CD4-positive, alpha-beta T cell (primary cell): ENCODE measurements at regions of chr9 and their contacts with region 1.

Region 1: DNA sequence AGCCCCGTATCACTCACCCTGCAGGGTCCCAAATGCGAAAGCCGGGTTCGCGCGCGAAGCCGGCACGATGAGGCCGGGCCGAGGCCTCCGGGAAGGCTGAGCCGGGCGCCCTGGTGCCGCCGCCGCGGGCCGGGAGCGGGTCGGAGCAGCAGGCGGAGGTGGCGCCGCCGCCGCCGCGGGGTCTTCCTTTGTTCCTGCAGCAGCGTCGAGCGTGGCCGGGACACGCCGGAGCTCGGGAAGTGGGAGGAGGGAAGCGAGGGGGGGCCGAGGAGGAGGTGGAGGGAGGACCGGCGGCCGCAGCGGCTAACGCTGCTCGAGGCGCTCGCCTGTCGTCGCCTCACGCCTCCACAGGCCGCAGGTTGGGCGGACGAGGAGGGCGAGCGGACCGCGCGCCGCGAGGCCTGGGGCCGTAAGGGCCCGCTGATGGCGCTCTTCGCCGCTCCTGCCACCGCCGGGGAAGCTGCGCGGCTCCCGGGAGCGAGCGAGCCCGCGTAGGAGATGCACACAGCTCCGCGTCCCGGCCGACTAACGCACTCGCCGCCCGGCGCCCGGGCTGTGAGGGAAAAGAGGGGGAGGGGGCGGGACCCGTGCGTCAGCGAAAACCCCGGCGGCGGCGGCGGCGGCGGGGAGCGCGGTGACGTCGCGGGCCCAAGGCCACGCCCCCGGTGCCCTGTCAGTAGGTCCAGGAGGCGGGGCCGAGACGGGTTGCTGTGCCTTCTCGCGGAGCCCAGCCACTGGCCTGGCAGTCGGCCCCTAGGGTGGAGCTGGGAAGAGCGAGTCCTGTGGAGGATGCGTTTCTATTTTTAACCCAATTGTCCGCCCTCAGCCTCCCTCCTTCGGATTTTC is at the start of gene ZFAND5:
- DNase-seq: peak; percentile 87 to 99 (median 92)
- ATAC-seq: peak; percentile 77
- H3K4me3 ChIP-seq: peak within 1 kb of the TSS; percentile 90
- H3K4me3 Mint-ChIP-seq: peak within 1 kb of the TSS; percentile 99
- H3K27ac ChIP-seq: peak within 1 kb of the TSS; percentile 97 to 99
- H3K27ac Mint-ChIP-seq: peak within 1 kb of the TSS; percentile 99
- H3K4me1 ChIP-seq: peaks cover 16% of the 10 kb centered on the region
- H3K4me1 Mint-ChIP-seq: peaks cover 51% of the 10 kb centered on the region
- H3K27me3 ChIP-seq: no peaks in the 10 kb centered on the region
- H3K27me3 Mint-ChIP-seq: no peaks in the 10 kb centered on the region
- CTCF ChIP-seq: no peak
- total RNA-seq, gene ZFAND5: 368 TPM

Region 2: DNA sequence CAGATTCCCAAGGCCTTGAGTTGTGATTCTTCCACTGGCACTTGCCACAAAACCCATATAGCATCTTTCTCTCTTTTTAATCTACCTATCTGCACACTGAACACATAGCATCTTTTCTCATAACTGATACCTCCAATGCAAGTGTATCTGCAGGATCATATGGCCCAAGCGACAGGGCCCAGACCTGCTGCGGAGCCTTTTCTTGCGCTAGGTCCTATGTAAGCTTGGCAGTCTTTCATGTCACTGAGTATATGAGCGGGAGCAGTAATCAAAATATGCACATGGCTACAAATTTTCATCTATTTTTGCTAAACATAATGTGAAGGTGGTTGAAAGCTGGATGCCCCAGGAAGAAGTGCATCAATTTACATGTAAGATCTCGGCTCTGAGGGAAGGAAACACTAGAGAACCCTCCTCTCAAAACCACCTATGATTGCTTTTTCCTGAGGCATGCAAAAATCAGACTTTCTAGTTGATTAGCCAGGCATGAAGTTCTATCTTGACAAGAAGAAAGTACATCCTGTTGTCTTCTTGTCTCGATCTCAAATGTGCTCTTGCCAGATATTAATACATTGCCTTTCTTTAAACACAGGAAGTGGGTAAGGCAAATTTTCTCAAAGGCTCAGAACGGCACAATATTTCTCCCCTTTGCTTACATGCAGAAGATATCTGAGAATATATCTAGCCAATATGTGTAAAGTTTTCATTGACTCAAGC is 569.6 kb before region 1 on chr9:
- CTCF ChIA-PET with region 1: no interaction called
- POLR2A ChIA-PET with region 1: interaction called, 9 read pairs
- intact Hi-C with region 1: loop called in 1 of 2 experiments (anchors 5 kb)
- DNase-seq: peak in 6 of 14 experiments; percentile 14 to 89 (median 59)
- ATAC-seq: peak; percentile 88
- H3K4me3 ChIP-seq: no peak overlapping the region
- H3K4me3 Mint-ChIP-seq: peak overlapping the region; percentile 60
- H3K27ac ChIP-seq: peak overlapping the region; percentile 46 to 86
- H3K27ac Mint-ChIP-seq: peak overlapping the region; percentile 94
- H3K4me1 ChIP-seq: peaks cover 57% of the 10 kb centered on the region
- H3K4me1 Mint-ChIP-seq: peaks cover 73% of the 10 kb centered on the region
- H3K27me3 ChIP-seq: no peaks in the 10 kb centered on the region
- H3K27me3 Mint-ChIP-seq: no peaks in the 10 kb centered on the region
- CTCF ChIP-seq: no peak

Region 3: GRCh38 chr9:71916834-71917534 is 447.9 kb before region 1 on chr9:
- CTCF ChIA-PET with region 1: no interaction called
- POLR2A ChIA-PET with region 1: no interaction called
- intact Hi-C with region 1: loop called in 1 of 2 experiments (anchors 5 kb)
- DNase-seq: no peak
- ATAC-seq: no peak
- H3K4me3 ChIP-seq: no peak overlapping the region
- H3K4me3 Mint-ChIP-seq: no peak overlapping the region
- H3K27ac ChIP-seq: no peak overlapping the region
- H3K27ac Mint-ChIP-seq: no peak overlapping the region
- H3K4me1 ChIP-seq: peaks cover 8% of the 10 kb centered on the region
- H3K4me1 Mint-ChIP-seq: peaks cover 55% of the 10 kb centered on the region
- H3K27me3 ChIP-seq: no peaks in the 10 kb centered on the region
- H3K27me3 Mint-ChIP-seq: no peaks in the 10 kb centered on the region
- CTCF ChIP-seq: no peak

Region 4: GRCh38 chr9:72415163-72415562 is 50.3 kb after region 1 on chr9:
- CTCF ChIA-PET with region 1: no interaction called
- POLR2A ChIA-PET with region 1: no interaction called
- intact Hi-C with region 1: no loop called
- DNase-seq: no peak
- ATAC-seq: no peak
- H3K4me3 ChIP-seq: no peak overlapping the region
- H3K4me3 Mint-ChIP-seq: no peak overlapping the region
- H3K27ac ChIP-seq: no peak overlapping the region
- H3K27ac Mint-ChIP-seq: no peak overlapping the region
- H3K4me1 ChIP-seq: no peaks in the 10 kb centered on the region
- H3K4me1 Mint-ChIP-seq: no peaks in the 10 kb centered on the region
- H3K27me3 ChIP-seq: no peaks in the 10 kb centered on the region
- H3K27me3 Mint-ChIP-seq: no peaks in the 10 kb centered on the region
- CTCF ChIP-seq: no peak

Region 5: DNA sequence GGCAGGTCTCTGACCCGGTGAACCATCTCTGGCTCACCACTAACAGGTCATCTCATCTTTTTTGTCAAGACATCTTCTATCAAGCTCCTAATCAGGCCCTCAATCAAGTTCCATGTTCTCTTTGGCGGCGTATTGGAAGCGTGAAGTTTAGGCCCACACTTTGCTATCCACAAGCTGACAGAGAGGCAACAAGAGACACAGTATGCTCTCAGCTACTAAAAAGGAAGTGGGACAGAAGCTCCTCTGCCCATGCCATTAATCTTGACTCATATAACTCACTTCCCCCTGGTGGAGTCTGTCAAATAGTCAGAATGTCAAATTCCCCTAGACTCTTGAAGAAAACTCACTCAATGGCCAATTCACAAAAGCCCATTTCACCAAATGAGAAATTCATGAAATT is 79.0 kb after region 1 on chr9:
- CTCF ChIA-PET with region 1: no interaction called
- POLR2A ChIA-PET with region 1: interaction called, 15 read pairs
- intact Hi-C with region 1: loop called (anchors 5 to 10 kb)
- DNase-seq: peak in 4 of 14 experiments; percentile 21 to 65 (median 52)
- ATAC-seq: peak; percentile 56
- H3K4me3 ChIP-seq: no peak overlapping the region
- H3K4me3 Mint-ChIP-seq: no peak overlapping the region
- H3K27ac ChIP-seq: no peak overlapping the region
- H3K27ac Mint-ChIP-seq: peak overlapping the region; percentile 31
- H3K4me1 ChIP-seq: peaks cover 13% of the 10 kb centered on the region
- H3K4me1 Mint-ChIP-seq: peaks cover 24% of the 10 kb centered on the region
- H3K27me3 ChIP-seq: no peaks in the 10 kb centered on the region
- H3K27me3 Mint-ChIP-seq: no peaks in the 10 kb centered on the region
- CTCF ChIP-seq: no peak

Region 6: DNA sequence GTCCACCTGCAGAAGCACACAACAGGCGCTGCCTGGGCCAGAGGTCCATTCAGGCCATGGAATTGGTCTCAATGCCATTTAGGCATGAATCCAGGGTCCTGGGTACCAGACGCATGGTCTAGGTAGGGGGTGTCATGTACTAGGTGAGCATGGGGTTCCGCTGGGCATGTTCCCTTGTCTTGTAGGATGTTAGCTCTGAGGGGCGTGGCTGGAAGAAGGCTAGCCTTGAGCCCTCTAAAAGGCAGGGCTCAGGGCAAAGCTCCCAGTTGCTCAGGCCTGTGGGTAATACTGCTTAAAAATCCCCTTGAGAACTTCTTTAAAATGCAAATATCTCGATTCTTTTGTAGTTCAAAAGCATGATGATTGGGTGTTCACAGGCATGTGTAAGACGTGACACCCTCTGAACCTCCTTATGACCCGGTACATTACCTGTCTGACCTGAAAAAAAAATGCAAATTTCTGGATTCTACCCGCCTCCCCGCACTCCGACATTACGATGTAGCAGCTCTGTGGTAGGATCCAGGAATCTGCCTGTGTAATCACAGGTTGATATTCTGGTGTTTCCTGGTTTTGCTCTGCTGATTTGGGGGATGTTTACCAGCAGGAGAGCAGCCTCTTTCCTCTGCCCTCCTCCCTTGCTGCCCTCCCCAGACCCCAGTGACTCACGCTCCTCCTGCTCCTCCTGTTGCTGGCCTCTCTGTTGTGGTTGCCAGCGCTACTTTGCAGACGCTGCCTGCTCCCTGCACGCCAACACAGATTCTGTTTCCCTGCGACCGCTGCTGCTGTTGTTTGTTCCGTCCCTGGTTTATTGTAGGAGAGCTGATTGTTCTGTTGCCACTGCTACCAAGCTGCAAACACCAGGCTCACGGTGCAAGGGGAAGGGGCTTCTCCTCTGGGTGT is 162.2 kb after region 1 on chr9:
- CTCF ChIA-PET with region 1: no interaction called
- POLR2A ChIA-PET with region 1: interaction called, 35 read pairs
- intact Hi-C with region 1: loop called (anchors 2 to 5 kb)
- DNase-seq: peak; percentile 58 to 91 (median 80)
- ATAC-seq: peak; percentile 85
- H3K4me3 ChIP-seq: peak overlapping the region; percentile 47
- H3K4me3 Mint-ChIP-seq: peak overlapping the region; percentile 84
- H3K27ac ChIP-seq: peak overlapping the region; percentile 59 to 63
- H3K27ac Mint-ChIP-seq: peak overlapping the region; percentile 84
- H3K4me1 ChIP-seq: peaks cover 25% of the 10 kb centered on the region
- H3K4me1 Mint-ChIP-seq: peaks cover 31% of the 10 kb centered on the region
- H3K27me3 ChIP-seq: no peaks in the 10 kb centered on the region
- H3K27me3 Mint-ChIP-seq: no peaks in the 10 kb centered on the region
- CTCF ChIP-seq: no peak

Region 7: GRCh38 chr9:72592502-72593403 is 227.9 kb after region 1 on chr9:
- CTCF ChIA-PET with region 1: no interaction called
- POLR2A ChIA-PET with region 1: interaction called, 4 read pairs
- intact Hi-C with region 1: loop called (anchors 5 kb)
- DNase-seq: peak in 8 of 14 experiments; percentile 2 to 80 (median 34)
- ATAC-seq: peak; percentile 80
- H3K4me3 ChIP-seq: no peak overlapping the region
- H3K4me3 Mint-ChIP-seq: no peak overlapping the region
- H3K27ac ChIP-seq: no peak overlapping the region
- H3K27ac Mint-ChIP-seq: no peak overlapping the region
- H3K4me1 ChIP-seq: no peaks in the 10 kb centered on the region
- H3K4me1 Mint-ChIP-seq: peaks cover 4% of the 10 kb centered on the region
- H3K27me3 ChIP-seq: no peaks in the 10 kb centered on the region
- H3K27me3 Mint-ChIP-seq: peaks cover 4% of the 10 kb centered on the region
- CTCF ChIP-seq: peak; percentile 95

Region 8: DNA sequence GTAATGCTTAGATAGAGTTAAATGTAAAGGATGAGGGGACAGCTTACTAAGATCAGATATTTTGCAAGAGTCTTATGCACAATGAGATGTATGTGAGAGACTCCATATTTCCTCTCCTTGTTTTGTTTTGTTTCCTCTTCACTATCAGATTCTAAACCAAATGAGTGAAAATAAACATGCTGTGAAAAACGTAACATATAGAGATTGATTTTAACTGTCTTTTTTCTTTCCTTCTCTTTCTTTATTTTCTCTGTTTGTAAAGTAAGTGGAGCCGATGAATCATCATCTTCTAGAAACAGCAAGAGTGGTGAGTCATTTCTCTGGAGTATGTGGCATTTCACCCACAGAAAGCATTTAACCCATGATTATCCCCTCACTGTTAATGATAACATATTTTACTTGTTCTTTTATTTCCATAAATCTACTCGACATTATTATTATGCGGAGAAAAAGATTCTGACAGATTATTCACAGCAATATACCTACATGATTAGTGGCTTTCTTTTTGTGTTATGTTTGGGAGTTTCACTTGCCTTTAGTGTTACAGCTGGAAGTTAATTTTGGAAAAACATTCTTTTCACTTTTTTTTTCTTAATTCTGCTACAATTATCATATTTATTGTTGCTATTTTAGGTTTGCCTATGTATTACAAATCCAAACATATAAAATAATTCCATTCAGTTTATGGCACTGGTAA is 784.6 kb after region 1 on chr9:
- CTCF ChIA-PET with region 1: no interaction called
- POLR2A ChIA-PET with region 1: interaction called, 10 read pairs
- intact Hi-C with region 1: no loop called
- DNase-seq: peak in 4 of 14 experiments; percentile 16 to 78 (median 69)
- ATAC-seq: peak; percentile 48
- H3K4me3 ChIP-seq: peak overlapping the region; percentile 9
- H3K4me3 Mint-ChIP-seq: peak overlapping the region; percentile 67
- H3K27ac ChIP-seq: no peak overlapping the region
- H3K27ac Mint-ChIP-seq: peak overlapping the region; percentile 71
- H3K4me1 ChIP-seq: peaks cover 9% of the 10 kb centered on the region
- H3K4me1 Mint-ChIP-seq: peaks cover 66% of the 10 kb centered on the region
- H3K27me3 ChIP-seq: no peaks in the 10 kb centered on the region
- H3K27me3 Mint-ChIP-seq: no peaks in the 10 kb centered on the region
- CTCF ChIP-seq: no peak